PC-3 (cell line): ENCODE measurements at regions of chr4 and their contacts with region 1.

Region 1: DNA sequence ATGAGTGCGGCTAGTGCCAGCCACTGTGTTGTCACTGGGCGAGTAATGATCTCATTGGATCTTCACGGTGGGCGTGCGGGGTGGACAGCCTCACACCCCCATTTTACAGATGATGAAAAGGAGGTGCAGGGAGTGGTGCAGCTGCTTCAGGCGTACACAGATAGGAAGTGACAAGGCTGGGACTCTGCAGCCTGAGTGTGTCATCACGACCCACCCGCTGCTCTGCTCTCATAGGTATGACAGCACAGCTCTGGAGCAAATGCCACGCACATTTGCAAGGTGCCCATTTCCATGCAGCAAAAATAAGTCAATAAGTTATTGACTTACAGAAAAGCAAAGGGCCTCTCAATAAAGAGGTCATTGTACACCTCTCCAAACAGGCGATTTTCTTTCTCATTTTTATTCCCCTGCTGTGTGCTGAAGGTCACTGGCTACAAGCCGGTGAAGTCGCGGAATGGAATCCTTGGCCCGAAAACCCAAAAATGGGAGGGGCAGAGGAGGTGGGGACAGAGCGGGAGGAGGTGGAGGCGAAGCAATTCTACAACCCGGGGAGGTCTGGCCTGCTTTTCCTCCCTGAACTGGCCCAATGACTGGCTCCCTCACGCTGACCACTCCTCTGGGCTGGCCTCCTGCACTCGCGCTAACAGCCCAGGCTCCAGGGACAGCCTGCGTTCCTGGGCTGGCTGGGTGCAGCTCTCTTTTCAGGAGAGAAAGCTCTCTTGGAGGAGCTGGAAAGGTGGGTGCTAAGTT is at the start of gene SOD3:
- DNase-seq: peak; percentile 86
- ATAC-seq: peak; percentile 96
- H3K4me3 ChIP-seq: peak within 1 kb of the TSS; percentile 63
- H3K27ac ChIP-seq: peak within 1 kb of the TSS; percentile 63
- H3K4me1 ChIP-seq: peaks cover 24% of the 10 kb centered on the region
- H3K27me3 ChIP-seq: no peaks in the 10 kb centered on the region
- CTCF ChIP-seq: no peak
- total RNA-seq, gene SOD3: 10.7 and 16.4 TPM in 2 replicates

Region 2: GRCh38 chr4:24363751-24364150 is 431.3 kb before region 1 on chr4:
- CTCF ChIA-PET with region 1: no interaction called
- POLR2A ChIA-PET with region 1: no interaction called
- intact Hi-C with region 1: no loop called
- DNase-seq: no peak
- ATAC-seq: no peak
- H3K4me3 ChIP-seq: no peak overlapping the region
- H3K27ac ChIP-seq: no peak overlapping the region
- H3K4me1 ChIP-seq: no peaks in the 10 kb centered on the region
- H3K27me3 ChIP-seq: peaks cover 27% of the 10 kb centered on the region
- CTCF ChIP-seq: no peak

Region 3: DNA sequence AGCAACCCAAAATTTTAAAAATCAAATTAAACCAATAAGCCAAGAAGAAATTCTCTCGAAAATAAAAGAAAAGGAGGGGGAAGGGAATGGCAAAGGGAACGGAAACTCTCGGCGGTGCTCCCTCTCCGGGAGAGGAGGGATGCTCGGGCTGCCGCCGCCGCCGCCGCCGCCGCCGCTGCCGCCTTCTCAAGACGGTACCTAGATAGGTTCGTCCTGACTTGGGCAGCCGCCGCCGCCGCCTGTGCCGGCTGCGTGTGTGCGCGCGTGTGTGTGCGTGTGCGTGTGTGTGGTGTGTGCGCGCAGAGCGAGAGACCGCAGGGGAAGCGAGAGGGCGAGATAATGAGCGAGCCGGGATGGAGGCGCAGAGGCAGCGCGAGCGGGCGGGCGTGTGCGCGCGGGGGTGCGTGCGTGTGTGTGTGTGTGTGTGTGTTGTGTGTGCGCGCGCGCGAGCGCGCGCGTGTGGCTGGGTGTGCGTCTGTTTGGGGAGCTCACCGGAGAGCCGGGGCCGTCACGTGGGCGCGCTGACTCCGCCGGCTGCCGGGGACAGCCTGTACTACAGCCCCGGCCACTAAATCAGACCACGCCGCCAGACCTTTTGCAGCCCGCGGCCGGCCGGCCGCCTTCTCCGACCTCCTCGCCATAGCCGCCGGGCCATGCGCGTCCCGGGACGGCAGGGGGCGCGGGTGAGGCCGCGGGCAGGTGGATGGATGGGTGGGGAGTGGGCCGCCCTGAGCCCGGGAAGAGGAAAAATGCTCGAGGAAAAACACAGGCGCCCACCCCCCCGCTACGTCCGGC is 322.4 kb before region 1 on chr4:
- CTCF ChIA-PET with region 1: no interaction called
- POLR2A ChIA-PET with region 1: no interaction called
- intact Hi-C with region 1: loop called (anchors 2 kb)
- DNase-seq: peak; percentile 65
- ATAC-seq: peak; percentile 78
- H3K4me3 ChIP-seq: peak overlapping the region; percentile 81
- H3K27ac ChIP-seq: no peak overlapping the region
- H3K4me1 ChIP-seq: peaks cover 7% of the 10 kb centered on the region; the same call in 1 of the 2 replicates
- H3K27me3 ChIP-seq: peaks cover 17% of the 10 kb centered on the region
- CTCF ChIP-seq: peak; percentile 63

Region 4: GRCh38 chr4:24557026-24558025 is 237.8 kb before region 1 on chr4:
- CTCF ChIA-PET with region 1: no interaction called
- POLR2A ChIA-PET with region 1: no interaction called
- intact Hi-C with region 1: loop called (anchors 2 kb)
- DNase-seq: peak; percentile 35
- ATAC-seq: peak; percentile 73
- H3K4me3 ChIP-seq: no peak overlapping the region
- H3K27ac ChIP-seq: no peak overlapping the region
- H3K4me1 ChIP-seq: peaks cover 49% of the 10 kb centered on the region
- H3K27me3 ChIP-seq: no peaks in the 10 kb centered on the region
- CTCF ChIP-seq: no peak

Region 5: GRCh38 chr4:24657768-24658617 is 137.1 kb before region 1 on chr4:
- CTCF ChIA-PET with region 1: no interaction called
- POLR2A ChIA-PET with region 1: no interaction called
- intact Hi-C with region 1: loop called (anchors 1 kb)
- DNase-seq: peak; percentile 94
- ATAC-seq: peak; percentile 82
- H3K4me3 ChIP-seq: peak overlapping the region; percentile 44; the same call in 1 of the 2 replicates
- H3K27ac ChIP-seq: peak overlapping the region; percentile 82
- H3K4me1 ChIP-seq: peaks cover 40% of the 10 kb centered on the region
- H3K27me3 ChIP-seq: no peaks in the 10 kb centered on the region
- CTCF ChIP-seq: no peak

Region 6: GRCh38 chr4:24753500-24753899 is 41.6 kb before region 1 on chr4:
- CTCF ChIA-PET with region 1: no interaction called
- POLR2A ChIA-PET with region 1: no interaction called
- intact Hi-C with region 1: loop called (anchors 2 kb)
- DNase-seq: peak; percentile 98
- ATAC-seq: peak; percentile 90
- H3K4me3 ChIP-seq: no peak overlapping the region
- H3K27ac ChIP-seq: peak overlapping the region; percentile 93
- H3K4me1 ChIP-seq: peaks cover 24% of the 10 kb centered on the region
- H3K27me3 ChIP-seq: no peaks in the 10 kb centered on the region
- CTCF ChIP-seq: no peak

Region 7: GRCh38 chr4:24840821-24841587 is 45.9 kb after region 1 on chr4:
- CTCF ChIA-PET with region 1: no interaction called
- POLR2A ChIA-PET with region 1: no interaction called
- intact Hi-C with region 1: loop called (anchors 5 kb)
- DNase-seq: peak; percentile 83
- ATAC-seq: peak; percentile 66
- H3K4me3 ChIP-seq: peak overlapping the region; percentile 30; the same call in 1 of the 2 replicates
- H3K27ac ChIP-seq: peak overlapping the region; percentile 75
- H3K4me1 ChIP-seq: peaks cover 19% of the 10 kb centered on the region
- H3K27me3 ChIP-seq: no peaks in the 10 kb centered on the region
- CTCF ChIP-seq: peak; percentile 23; the same call in 1 of the 2 replicates

Region 8: GRCh38 chr4:24912252-24913118 is 117.4 kb after region 1 on chr4 and contains the start of gene CCDC149:
- CTCF ChIA-PET with region 1: no interaction called
- POLR2A ChIA-PET with region 1: no interaction called
- intact Hi-C with region 1: loop called (anchors 5 kb)
- DNase-seq: peak; percentile 79
- ATAC-seq: peak; percentile 89
- H3K4me3 ChIP-seq: peak within 1 kb of the TSS; percentile 68
- H3K27ac ChIP-seq: peak within 1 kb of the TSS; percentile 50
- H3K4me1 ChIP-seq: peaks cover 11% of the 10 kb centered on the region
- H3K27me3 ChIP-seq: no peaks in the 10 kb centered on the region
- CTCF ChIP-seq: no peak
- total RNA-seq, gene CCDC149: 5.9 and 7.9 TPM in 2 replicates